Sigmoid colon (tissue), 7 donors: ENCODE measurements at regions of chr6 and their contacts with region 1.

Region 1: DNA sequence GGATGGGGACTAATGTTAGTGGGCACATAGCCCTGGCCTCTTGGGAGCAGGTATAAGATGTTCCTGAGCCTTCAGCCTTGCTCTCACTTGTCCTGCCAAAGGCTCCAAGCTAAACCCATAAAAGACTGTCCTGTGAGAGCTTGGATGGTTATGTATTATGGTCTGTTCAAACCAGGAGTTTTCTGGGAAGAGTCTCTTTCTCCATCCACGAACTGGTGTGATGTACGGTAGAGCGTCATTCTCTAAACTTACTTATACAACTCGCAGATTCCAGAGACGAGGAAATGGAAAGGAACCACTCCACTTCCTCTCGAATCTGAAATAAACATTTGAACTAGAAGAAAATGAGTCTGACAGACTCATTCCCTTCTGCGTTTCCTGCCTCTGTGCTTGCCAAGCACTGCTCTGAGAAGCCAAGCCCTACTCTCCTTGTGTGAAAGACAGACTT is 5.3 kb downstream of the SOBP start:
- DNase-seq: peak; percentile 70
- H3K4me3 ChIP-seq: peak overlapping the region in 2 of 4 donors; percentile 9 to 22
- H3K27ac ChIP-seq: peak overlapping the region; percentile 88 to 95 (median 92)
- H3K4me1 ChIP-seq: peaks cover 0 to 77% (median 49%) of the 10 kb centered on the region in 4 donors
- H3K27me3 ChIP-seq: no peaks in the 10 kb centered on the region
- CTCF ChIP-seq: no peak
- EP300 ChIP-seq: no peak
- POLR2A ChIP-seq: no peak

Region 2: DNA sequence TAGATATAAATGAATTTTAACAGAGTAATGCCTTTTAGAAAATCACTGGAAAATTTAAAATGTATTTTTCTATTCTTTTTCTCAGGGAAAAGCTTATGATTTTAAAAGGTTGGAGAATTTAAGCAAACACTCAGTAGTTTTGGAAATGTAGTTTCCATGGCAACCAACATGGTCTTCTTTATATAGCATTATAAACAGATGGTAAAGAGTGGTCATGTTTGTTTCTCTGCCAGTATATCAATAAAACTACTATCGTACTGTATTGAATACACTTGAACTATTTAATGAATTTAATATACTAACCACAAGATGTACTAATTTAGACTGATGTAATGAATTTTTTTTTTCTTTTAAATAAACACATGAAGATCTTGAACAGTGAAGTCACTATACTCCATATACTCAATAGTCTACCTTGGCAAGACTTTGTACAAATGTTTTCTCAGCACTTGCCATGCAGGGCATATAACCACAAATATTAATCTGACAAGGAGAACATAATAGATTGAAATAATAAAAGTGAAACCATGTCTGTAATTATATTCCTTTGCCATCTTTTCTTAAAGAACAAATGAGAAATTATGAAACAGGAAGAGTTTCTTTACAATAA is 141.3 kb before region 1 on chr6:
- intact Hi-C with region 1: no loop called
- DNase-seq: no peak
- H3K4me3 ChIP-seq: no peak overlapping the region
- H3K27ac ChIP-seq: no peak overlapping the region
- H3K4me1 ChIP-seq: peaks cover 0 to 9% (median 0%) of the 10 kb centered on the region in 4 donors
- H3K27me3 ChIP-seq: no peaks in the 10 kb centered on the region
- CTCF ChIP-seq: no peak
- EP300 ChIP-seq: no peak
- POLR2A ChIP-seq: no peak

Region 3: GRCh38 chr6:107532706-107533105 is 37.5 kb after region 1 on chr6:
- intact Hi-C with region 1: loop called (anchors 5 kb)
- DNase-seq: peak; percentile 77
- H3K4me3 ChIP-seq: no peak overlapping the region
- H3K27ac ChIP-seq: peak overlapping the region; percentile 19 to 65 (median 56)
- H3K4me1 ChIP-seq: peaks cover 0 to 71% (median 36%) of the 10 kb centered on the region in 4 donors
- H3K27me3 ChIP-seq: no peaks in the 10 kb centered on the region
- CTCF ChIP-seq: no peak
- EP300 ChIP-seq: no peak
- POLR2A ChIP-seq: no peak

Region 4: GRCh38 chr6:107571354-107571753 is 76.1 kb after region 1 on chr6:
- intact Hi-C with region 1: no loop called
- DNase-seq: no peak
- H3K4me3 ChIP-seq: no peak overlapping the region
- H3K27ac ChIP-seq: no peak overlapping the region
- H3K4me1 ChIP-seq: no peaks in the 10 kb centered on the region
- H3K27me3 ChIP-seq: no peaks in the 10 kb centered on the region
- CTCF ChIP-seq: no peak
- EP300 ChIP-seq: no peak
- POLR2A ChIP-seq: no peak